ENCODE measurements at regions of chr13 and their contacts with region 1.

Region 1: GRCh38 chr13:33542283-33543088 is 256.9 kb upstream of the STARD13 start:
- DNase-seq: peak; percentile 99
- H3K4me3 Mint-ChIP-seq: peak overlapping the region; percentile 90
- H3K27ac Mint-ChIP-seq: peak overlapping the region; percentile 100
- H3K4me1 Mint-ChIP-seq: peaks cover 53% of the 10 kb centered on the region
- H3K27me3 Mint-ChIP-seq: no peaks in the 10 kb centered on the region

Region 2: DNA sequence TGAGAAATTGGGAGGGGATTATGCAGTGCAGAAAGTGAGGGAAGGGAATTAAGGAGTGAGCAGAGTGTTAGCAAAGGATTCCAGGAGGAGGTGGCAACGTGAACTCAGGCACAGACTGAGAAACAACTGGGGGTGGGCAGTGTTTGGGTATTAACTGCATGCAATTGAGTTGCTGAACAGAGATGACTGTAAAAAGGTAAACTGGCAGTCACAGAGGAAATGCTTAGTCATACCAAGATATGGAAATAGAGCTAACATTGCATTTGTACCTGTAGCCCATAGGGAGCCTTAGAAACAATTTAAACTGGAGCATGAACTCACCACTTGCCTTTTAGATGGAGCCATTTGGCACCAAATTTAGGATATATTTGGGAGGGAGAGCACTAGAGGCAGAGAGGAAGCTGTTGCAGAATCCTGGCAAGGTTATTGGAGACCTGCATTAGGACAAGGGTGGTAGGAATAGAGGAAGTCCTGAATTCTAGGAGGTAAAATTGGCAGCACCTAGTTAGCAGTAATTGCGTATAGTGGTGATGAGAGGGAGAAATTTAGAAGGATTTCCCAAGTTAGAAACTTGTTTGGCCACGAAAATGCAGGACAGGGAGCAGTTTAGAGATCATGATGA is 1611.5 kb before region 1 on chr13:
- intact Hi-C with region 1: loop called (anchors 5 kb)
- DNase-seq: peak; percentile 48
- H3K4me3 Mint-ChIP-seq: no peak overlapping the region
- H3K27ac Mint-ChIP-seq: no peak overlapping the region
- H3K4me1 Mint-ChIP-seq: peaks cover 17% of the 10 kb centered on the region
- H3K27me3 Mint-ChIP-seq: peaks cover 4% of the 10 kb centered on the region

Region 3: DNA sequence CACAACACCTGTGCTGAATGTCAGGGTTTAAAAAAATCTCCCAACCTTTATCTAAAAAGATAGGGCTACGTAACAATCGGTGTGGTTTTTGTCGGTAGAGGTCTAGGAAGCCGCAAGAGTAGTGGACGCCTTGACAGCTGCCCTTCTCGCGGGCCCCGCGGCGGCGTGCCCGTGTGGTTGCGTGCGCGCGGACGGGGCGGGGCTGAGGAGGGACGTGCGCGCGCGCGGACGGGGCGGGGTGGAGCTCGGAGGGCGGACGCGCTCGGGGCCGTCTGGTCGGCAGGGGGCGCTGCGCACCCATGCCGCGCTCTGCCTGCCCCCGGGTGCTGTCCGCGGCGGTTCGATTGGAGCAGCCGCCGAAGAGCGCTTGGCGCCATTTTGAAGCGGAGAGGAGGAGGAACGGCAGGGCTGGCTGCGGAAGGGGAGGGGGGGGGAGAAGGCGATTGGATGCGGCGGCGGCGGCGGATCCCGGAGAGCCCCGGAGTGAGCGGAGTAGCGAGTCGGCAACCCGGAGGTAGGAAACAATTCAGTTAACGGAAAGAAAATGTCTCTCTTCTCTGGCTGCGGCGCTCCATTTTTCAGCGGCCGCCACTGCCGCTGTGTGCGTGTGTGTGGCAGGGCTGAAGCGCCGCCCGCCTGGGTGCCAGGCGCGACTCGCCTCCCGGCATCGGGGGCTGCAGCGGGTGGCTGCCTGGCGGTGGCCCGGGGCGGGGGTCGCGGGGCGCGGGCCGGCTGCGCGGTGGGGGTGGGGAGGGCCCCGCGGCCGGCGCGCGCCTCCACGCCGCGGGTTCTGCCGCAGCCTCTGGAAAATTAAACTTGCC is 956.2 kb before region 1 on chr13 and contains the start of gene PDS5B:
- intact Hi-C with region 1: loop called (anchors 1 kb)
- DNase-seq: peak; percentile 93
- H3K4me3 Mint-ChIP-seq: peak within 1 kb of the TSS; percentile 95
- H3K27ac Mint-ChIP-seq: peak within 1 kb of the TSS; percentile 96
- H3K4me1 Mint-ChIP-seq: peaks cover 45% of the 10 kb centered on the region
- H3K27me3 Mint-ChIP-seq: peaks cover 16% of the 10 kb centered on the region
- total RNA-seq, gene PDS5B: 57.8 and 62.7 TPM in 2 replicates

Region 4: GRCh38 chr13:33017323-33017929 is 525.1 kb before region 1 on chr13:
- intact Hi-C with region 1: loop called (anchors 1 kb)
- DNase-seq: peak; percentile 29
- H3K4me3 Mint-ChIP-seq: peak overlapping the region; percentile 78
- H3K27ac Mint-ChIP-seq: peak overlapping the region; percentile 41
- H3K4me1 Mint-ChIP-seq: peaks cover 21% of the 10 kb centered on the region
- H3K27me3 Mint-ChIP-seq: peaks cover 56% of the 10 kb centered on the region

Region 5: GRCh38 chr13:33188093-33188882 is 354.2 kb before region 1 on chr13:
- intact Hi-C with region 1: loop called (anchors 1 kb)
- DNase-seq: no peak
- H3K4me3 Mint-ChIP-seq: peak overlapping the region; percentile 34
- H3K27ac Mint-ChIP-seq: peak overlapping the region; percentile 99
- H3K4me1 Mint-ChIP-seq: peaks cover 52% of the 10 kb centered on the region
- H3K27me3 Mint-ChIP-seq: no peaks in the 10 kb centered on the region

Region 6: DNA sequence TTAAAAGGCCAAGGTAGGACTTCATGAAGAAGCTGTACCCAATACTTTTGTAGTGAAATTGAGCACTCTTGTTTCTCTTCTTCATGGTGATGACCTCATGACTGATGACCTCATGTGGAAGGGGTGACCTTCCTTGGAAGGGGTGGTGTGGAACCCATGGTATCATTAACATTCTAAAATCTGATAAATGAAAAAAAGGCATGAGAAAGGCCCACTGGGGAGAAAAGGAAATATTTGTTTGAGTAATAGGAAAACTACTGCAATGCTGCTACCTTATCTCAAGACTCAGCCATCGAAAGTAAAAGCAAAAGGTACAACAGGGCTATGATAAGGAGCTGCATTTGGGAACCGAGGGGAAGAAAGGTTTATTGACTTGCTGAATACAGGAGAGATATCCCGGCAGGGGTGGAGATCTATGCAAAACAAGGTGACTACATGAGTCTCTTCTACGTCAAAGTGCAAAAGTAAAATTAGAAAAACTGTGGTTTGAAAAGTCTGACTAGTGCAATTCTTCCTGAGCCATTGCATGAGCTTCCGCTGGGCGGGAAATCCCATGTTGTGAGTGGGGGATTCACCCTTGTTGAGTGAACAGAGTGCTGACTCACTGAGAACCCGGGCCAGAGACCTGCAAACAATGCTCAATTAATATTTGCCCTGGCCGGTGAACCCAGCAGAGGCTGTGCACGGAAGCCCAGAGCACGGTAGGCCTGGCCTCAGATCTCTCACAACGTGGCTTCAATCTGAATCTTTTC is 136.6 kb after region 1 on chr13:
- intact Hi-C with region 1: loop called (anchors 1 kb)
- DNase-seq: peak; percentile 71
- H3K4me3 Mint-ChIP-seq: peak overlapping the region; percentile 73
- H3K27ac Mint-ChIP-seq: peak overlapping the region; percentile 91
- H3K4me1 Mint-ChIP-seq: peaks cover 36% of the 10 kb centered on the region
- H3K27me3 Mint-ChIP-seq: peaks cover 2% of the 10 kb centered on the region